ENCODE measurements at regions of chr5 and their contacts with region 1.

Region 1: GRCh38 chr5:138760448-138761110 is 7.4 kb downstream of the CTNNA1 start:
- DNase-seq: peak; percentile 37
- H3K4me3 Mint-ChIP-seq: no peak overlapping the region
- H3K27ac Mint-ChIP-seq: peak overlapping the region; percentile 86
- H3K4me1 Mint-ChIP-seq: peaks cover 60% of the 10 kb centered on the region
- H3K27me3 Mint-ChIP-seq: no peaks in the 10 kb centered on the region
- CTCF ChIP-seq: no peak

Region 2: DNA sequence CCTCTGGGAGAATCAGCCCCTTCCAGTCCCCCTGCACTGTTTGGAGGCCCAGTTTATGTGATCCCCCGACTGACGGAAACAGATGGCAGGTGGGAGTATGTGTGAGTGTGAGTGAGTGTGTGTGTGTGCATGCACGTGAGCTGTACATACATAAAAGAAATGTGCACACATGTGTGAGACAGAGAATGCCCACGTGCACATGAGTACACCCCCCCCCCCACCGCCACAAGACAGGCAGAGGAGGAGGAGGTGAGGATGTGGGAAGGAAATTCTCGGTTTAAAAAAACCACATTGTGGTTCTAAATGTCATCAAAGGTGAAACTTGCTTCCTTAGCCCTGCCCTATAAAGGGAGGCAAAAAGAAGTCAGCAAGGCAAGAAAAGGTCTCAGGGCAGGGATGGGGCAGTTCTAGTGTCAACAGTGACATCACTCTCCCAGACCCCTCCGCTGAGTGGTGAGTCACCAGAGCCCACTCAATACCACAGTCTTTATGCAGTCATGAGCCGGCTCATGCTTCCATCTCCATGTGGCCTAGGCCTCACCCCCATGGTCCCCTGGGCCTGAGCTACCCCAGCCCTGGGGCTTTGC is 106.2 kb before region 1 on chr5:
- CTCF ChIA-PET with region 1: interaction called, 10 read pairs
- POLR2A ChIA-PET with region 1: no interaction called
- intact Hi-C with region 1: loop called (anchors 2 kb)
- DNase-seq: no peak
- H3K4me3 Mint-ChIP-seq: no peak overlapping the region
- H3K27ac Mint-ChIP-seq: no peak overlapping the region
- H3K4me1 Mint-ChIP-seq: no peaks in the 10 kb centered on the region
- H3K27me3 Mint-ChIP-seq: no peaks in the 10 kb centered on the region
- CTCF ChIP-seq: no peak

Region 3: DNA sequence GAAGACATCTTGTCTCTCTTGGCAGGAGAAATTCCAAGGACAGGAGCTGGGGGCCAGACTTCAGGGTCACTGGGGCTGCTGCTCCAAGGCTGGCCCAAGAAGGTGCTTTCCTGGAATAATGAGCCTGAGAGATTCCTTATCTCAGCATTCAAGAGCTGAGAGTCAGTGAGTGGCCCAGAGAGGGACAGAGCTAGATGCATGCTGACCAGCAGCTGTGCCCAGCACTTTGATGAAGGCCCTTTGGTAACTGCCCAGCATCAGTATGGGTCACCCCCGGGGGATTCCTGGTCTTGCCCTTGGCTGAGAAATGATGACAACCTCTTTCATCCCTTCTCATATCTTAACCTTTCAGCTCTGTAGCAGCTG is 55.0 kb before region 1 on chr5:
- CTCF ChIA-PET with region 1: no interaction called
- POLR2A ChIA-PET with region 1: no interaction called
- intact Hi-C with region 1: no loop called
- DNase-seq: no peak
- H3K4me3 Mint-ChIP-seq: no peak overlapping the region
- H3K27ac Mint-ChIP-seq: no peak overlapping the region
- H3K4me1 Mint-ChIP-seq: no peaks in the 10 kb centered on the region
- H3K27me3 Mint-ChIP-seq: no peaks in the 10 kb centered on the region
- CTCF ChIP-seq: no peak

Region 4: GRCh38 chr5:138772986-138773594 is 12.5 kb after region 1 on chr5:
- CTCF ChIA-PET with region 1: interaction called, 6 read pairs
- POLR2A ChIA-PET with region 1: interaction called, 16 read pairs
- intact Hi-C with region 1: no loop called
- DNase-seq: no peak
- H3K4me3 Mint-ChIP-seq: no peak overlapping the region
- H3K27ac Mint-ChIP-seq: peak overlapping the region; percentile 4
- H3K4me1 Mint-ChIP-seq: peaks cover 18% of the 10 kb centered on the region
- H3K27me3 Mint-ChIP-seq: no peaks in the 10 kb centered on the region
- CTCF ChIP-seq: no peak

Region 5: DNA sequence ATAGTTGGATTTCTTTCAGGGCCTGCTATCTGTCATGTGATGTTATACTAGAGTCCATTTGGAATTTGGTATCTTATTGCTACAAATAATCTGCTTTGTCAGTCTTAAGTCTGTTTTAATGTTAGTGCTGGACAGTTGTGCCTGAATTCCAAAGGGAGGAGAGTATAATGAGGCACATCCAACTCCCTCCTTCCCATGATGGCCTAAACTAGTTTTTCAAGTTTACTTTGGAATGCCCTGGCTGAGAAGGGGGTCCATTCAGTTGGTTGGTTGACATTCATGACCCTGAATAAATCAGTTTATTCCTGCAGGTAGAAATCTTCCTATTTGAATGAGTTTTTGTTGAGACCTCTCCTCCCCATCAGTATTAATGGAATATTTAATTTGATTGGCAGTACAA is 124.0 kb after region 1 on chr5:
- CTCF ChIA-PET with region 1: no interaction called
- POLR2A ChIA-PET with region 1: no interaction called
- intact Hi-C with region 1: no loop called
- DNase-seq: no peak
- H3K4me3 Mint-ChIP-seq: no peak overlapping the region
- H3K27ac Mint-ChIP-seq: no peak overlapping the region
- H3K4me1 Mint-ChIP-seq: no peaks in the 10 kb centered on the region
- H3K27me3 Mint-ChIP-seq: no peaks in the 10 kb centered on the region
- CTCF ChIP-seq: no peak

Measured in MCF 10A (cell line).